ENCODE measurements at regions of chr3 and their contacts with region 1.

Region 1: GRCh38 chr3:45864760-45865519 is 21.4 kb upstream of the CCR9 start:
- DNase-seq: peak; percentile 37
- H3K4me3 Mint-ChIP-seq: no peak overlapping the region
- H3K27ac Mint-ChIP-seq: peak overlapping the region; percentile 5
- H3K4me1 Mint-ChIP-seq: peaks cover 67% of the 10 kb centered on the region
- H3K27me3 Mint-ChIP-seq: peaks cover 82% of the 10 kb centered on the region

Region 2: GRCh38 chr3:45852828-45853227 is 12.1 kb before region 1 on chr3:
- CTCF ChIA-PET with region 1: no interaction called
- POLR2A ChIA-PET with region 1: interaction called, 11 read pairs
- DNase-seq: no peak
- H3K4me3 Mint-ChIP-seq: no peak overlapping the region
- H3K27ac Mint-ChIP-seq: peak overlapping the region; percentile 18
- H3K4me1 Mint-ChIP-seq: peaks cover 27% of the 10 kb centered on the region
- H3K27me3 Mint-ChIP-seq: peaks cover 87% of the 10 kb centered on the region